Activated B cell treated with CpG ODN at 0.5 μM for 24 hours (primary cell): ENCODE measurements at regions of chr22 and their contacts with region 1.

Region 1: DNA sequence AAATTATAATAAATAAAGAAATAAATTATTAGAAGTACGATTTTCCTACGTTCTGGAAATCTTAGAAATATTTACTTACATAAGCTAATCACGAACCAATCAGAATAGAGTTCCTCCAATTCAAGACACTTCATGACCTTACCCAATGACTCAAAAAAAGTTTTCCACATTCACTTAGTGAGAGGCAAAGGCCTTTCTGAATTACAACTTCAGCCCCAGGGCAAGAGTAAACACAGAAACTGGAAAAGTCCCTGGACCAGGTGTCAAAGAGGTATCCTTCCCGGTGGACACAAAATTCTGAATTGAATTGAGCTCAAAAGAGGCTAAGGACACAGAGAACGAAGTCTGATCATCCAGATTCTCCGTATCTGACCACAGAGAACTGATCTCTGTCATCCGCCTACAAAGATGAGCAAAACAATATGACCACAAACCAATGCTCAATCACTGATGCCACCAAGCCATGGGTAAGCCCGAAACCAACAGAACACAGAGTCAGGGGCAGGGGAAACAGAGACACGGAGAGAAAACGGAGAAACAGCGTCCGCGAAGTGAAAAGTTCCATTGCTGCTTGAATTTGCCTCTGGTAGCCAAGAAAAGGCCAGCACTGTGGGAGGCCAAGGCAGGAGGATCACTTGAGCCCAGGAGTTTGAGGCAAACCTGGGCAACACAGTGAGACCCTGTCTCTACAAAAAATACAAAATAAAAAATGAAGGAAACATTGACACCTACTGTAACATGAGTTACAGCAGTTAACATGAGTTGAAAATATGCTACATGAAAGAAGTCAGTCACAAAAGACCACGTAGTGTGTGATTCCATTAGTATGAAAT is 6.8 kb downstream of the BID start:
- DNase-seq: no peak
- ATAC-seq: peak; percentile 59
- H3K4me3 Mint-ChIP-seq: peak overlapping the region; percentile 62
- H3K27ac Mint-ChIP-seq: peak overlapping the region; percentile 74
- H3K4me1 Mint-ChIP-seq: peaks cover 60% of the 10 kb centered on the region
- H3K27me3 Mint-ChIP-seq: no peaks in the 10 kb centered on the region
- CTCF ChIP-seq: no peak

Region 2: DNA sequence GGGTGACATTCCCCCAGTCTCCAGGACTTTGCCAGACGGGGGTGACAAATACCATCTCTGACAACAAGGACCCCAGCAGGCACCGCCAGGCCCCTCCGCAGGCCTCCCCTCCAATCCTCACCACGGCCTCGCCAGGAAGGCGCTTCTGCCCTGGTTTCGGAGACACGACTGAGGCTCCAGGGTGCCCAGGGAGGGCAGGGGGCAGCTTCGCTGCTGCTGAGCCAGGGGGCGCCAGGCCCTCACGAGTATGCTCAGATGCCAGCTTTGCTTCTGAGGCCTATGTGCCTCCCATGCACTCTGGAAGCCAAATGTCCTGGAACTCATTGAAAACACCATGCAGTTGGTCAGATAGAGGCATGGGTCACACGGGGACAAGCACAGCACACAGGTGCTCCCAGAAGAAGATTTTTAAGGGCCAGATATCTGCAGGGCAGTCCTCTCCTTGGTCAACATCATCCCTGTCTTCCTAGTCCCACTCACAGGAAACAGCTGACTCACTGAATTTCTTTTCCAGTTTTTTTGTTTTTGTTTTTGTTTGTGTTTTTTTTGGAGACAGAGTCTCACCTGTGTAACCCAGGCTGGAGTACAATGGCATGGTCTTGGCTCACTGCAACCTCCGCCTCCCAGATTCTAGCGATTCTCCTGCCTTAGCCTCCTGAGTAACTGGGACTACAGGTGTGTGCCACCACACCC is 13.1 kb before region 1 on chr22:
- CTCF ChIA-PET with region 1: interaction called, 3 read pairs
- POLR2A ChIA-PET with region 1: interaction called, 12 read pairs
- intact Hi-C with region 1: no loop called
- DNase-seq: no peak
- ATAC-seq: peak; percentile 60
- H3K4me3 Mint-ChIP-seq: no peak overlapping the region
- H3K27ac Mint-ChIP-seq: no peak overlapping the region
- H3K4me1 Mint-ChIP-seq: peaks cover 3% of the 10 kb centered on the region
- H3K27me3 Mint-ChIP-seq: no peaks in the 10 kb centered on the region
- CTCF ChIP-seq: no peak

Region 3: GRCh38 chr22:17797721-17798559 is 30.5 kb after region 1 on chr22:
- CTCF ChIA-PET with region 1: no interaction called
- POLR2A ChIA-PET with region 1: interaction called, 581 read pairs
- intact Hi-C with region 1: loop called (anchors 1 kb)
- DNase-seq: peak; percentile 41
- ATAC-seq: peak; percentile 62
- H3K4me3 Mint-ChIP-seq: peak overlapping the region; percentile 49
- H3K27ac Mint-ChIP-seq: peak overlapping the region; percentile 99
- H3K4me1 Mint-ChIP-seq: peaks cover 87% of the 10 kb centered on the region
- H3K27me3 Mint-ChIP-seq: no peaks in the 10 kb centered on the region
- CTCF ChIP-seq: no peak